ENCODE measurements at regions of chr4 and their contacts with region 1.

Region 1: DNA sequence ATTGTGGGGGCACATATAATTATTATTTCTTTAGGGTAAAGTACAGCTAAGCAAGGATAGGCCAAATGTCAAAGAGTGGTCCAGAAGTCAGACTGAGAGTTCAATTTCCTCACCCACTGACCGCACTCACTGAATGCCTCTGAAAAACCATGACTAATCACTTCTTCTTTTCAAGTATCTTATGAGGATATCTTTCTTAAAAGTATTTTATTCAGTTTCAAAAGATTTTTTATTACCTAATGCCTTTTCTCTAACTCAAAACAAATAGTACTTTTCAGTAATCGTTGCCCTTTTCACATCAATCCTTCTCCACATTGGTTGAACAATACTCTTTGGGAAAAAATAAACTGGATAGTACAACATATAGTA is 61.7 kb upstream of the CAMK2D start:
- DNase-seq: peak; percentile 85
- ATAC-seq: peak; percentile 84
- H3K4me3 ChIP-seq: peak overlapping the region; percentile 13; the same call in 1 of the 2 replicates
- H3K27ac ChIP-seq: peak overlapping the region; percentile 95
- H3K4me1 ChIP-seq: peaks cover 43% of the 10 kb centered on the region
- H3K27me3 ChIP-seq: no peaks in the 10 kb centered on the region
- CTCF ChIP-seq: no peak
- EP300 ChIP-seq: peak; percentile 54 to 88
- POLR2A ChIP-seq: no peak
- RAD21 ChIP-seq: no peak

Region 2: GRCh38 chr4:113423631-113424030 is 399.6 kb before region 1 on chr4:
- CTCF ChIA-PET with region 1: no interaction called
- POLR2A ChIA-PET with region 1: no interaction called
- RAD21 ChIA-PET with region 1: no interaction called
- SMC1A ChIA-PET with region 1: no interaction called
- in situ Hi-C with region 1: no loop called
- intact Hi-C with region 1: no loop called
- DNase-seq: no peak
- ATAC-seq: no peak
- H3K4me3 ChIP-seq: no peak overlapping the region
- H3K27ac ChIP-seq: no peak overlapping the region
- H3K4me1 ChIP-seq: no peaks in the 10 kb centered on the region
- H3K27me3 ChIP-seq: no peaks in the 10 kb centered on the region
- CTCF ChIP-seq: no peak
- EP300 ChIP-seq: no peak
- POLR2A ChIP-seq: no peak
- RAD21 ChIP-seq: no peak

Region 3: GRCh38 chr4:113684534-113685091 is 138.7 kb before region 1 on chr4:
- CTCF ChIA-PET with region 1: no interaction called
- POLR2A ChIA-PET with region 1: no interaction called
- RAD21 ChIA-PET with region 1: no interaction called
- SMC1A ChIA-PET with region 1: no interaction called
- in situ Hi-C with region 1: no loop called
- intact Hi-C with region 1: loop called (anchors 5 kb)
- DNase-seq: no peak
- ATAC-seq: peak; percentile 10; the same call in 2 of the 3 replicates
- H3K4me3 ChIP-seq: no peak overlapping the region
- H3K27ac ChIP-seq: no peak overlapping the region
- H3K4me1 ChIP-seq: peaks cover 32% of the 10 kb centered on the region
- H3K27me3 ChIP-seq: no peaks in the 10 kb centered on the region
- CTCF ChIP-seq: 0 out of 6 replicates have a peak, but pooled peaks of 1 of the 3 experiments have one; percentile 0
- EP300 ChIP-seq: no peak
- POLR2A ChIP-seq: no peak
- RAD21 ChIP-seq: 0 out of 2 replicates have a peak, but pooled peaks have one; percentile 4

Region 4: GRCh38 chr4:113761620-113762185 is 61.6 kb before region 1 on chr4 and contains the start of gene CAMK2D:
- CTCF ChIA-PET with region 1: no interaction called
- POLR2A ChIA-PET with region 1: no interaction called
- RAD21 ChIA-PET with region 1: interaction called, 9 read pairs
- SMC1A ChIA-PET with region 1: interaction called, 11 read pairs
- in situ Hi-C with region 1: no loop called
- intact Hi-C with region 1: loop called (anchors 1 kb)
- DNase-seq: peak; percentile 81
- ATAC-seq: peak; percentile 56
- H3K4me3 ChIP-seq: peak within 1 kb of the TSS; percentile 99
- H3K27ac ChIP-seq: peak within 1 kb of the TSS; percentile 98
- H3K4me1 ChIP-seq: no peaks in the 10 kb centered on the region
- H3K27me3 ChIP-seq: no peaks in the 10 kb centered on the region
- CTCF ChIP-seq: peak; percentile 60 to 95 (median 69)
- EP300 ChIP-seq: peak in 1 of 2 experiments; percentile 33; a peak in 2 of 4 replicates
- POLR2A ChIP-seq: no peak
- RAD21 ChIP-seq: peak; percentile 89
- polyA plus RNA-seq, gene CAMK2D: 6.9 to 10.2 TPM

Region 5: GRCh38 chr4:113781439-113782040 is 41.7 kb before region 1 on chr4:
- CTCF ChIA-PET with region 1: interaction called, 11 read pairs
- POLR2A ChIA-PET with region 1: interaction called, 3 read pairs
- RAD21 ChIA-PET with region 1: interaction called, 10 read pairs
- SMC1A ChIA-PET with region 1: interaction called, 28 read pairs
- in situ Hi-C with region 1: no loop called
- intact Hi-C with region 1: loop called (anchors 1 kb)
- DNase-seq: no peak
- ATAC-seq: peak; percentile 80
- H3K4me3 ChIP-seq: no peak overlapping the region
- H3K27ac ChIP-seq: no peak overlapping the region
- H3K4me1 ChIP-seq: no peaks in the 10 kb centered on the region
- H3K27me3 ChIP-seq: no peaks in the 10 kb centered on the region
- CTCF ChIP-seq: peak; percentile 45 to 47 (median 47); a peak in 4 of 6 replicates
- EP300 ChIP-seq: no peak
- POLR2A ChIP-seq: no peak
- RAD21 ChIP-seq: peak; percentile 65

Region 6: GRCh38 chr4:113869743-113870375 is 46.6 kb after region 1 on chr4:
- CTCF ChIA-PET with region 1: no interaction called
- POLR2A ChIA-PET with region 1: interaction called, 7 read pairs
- RAD21 ChIA-PET with region 1: interaction called, 4 read pairs
- SMC1A ChIA-PET with region 1: interaction called, 6 read pairs
- in situ Hi-C with region 1: no loop called
- intact Hi-C with region 1: loop called (anchors 2 kb)
- DNase-seq: peak; percentile 54
- ATAC-seq: peak; percentile 97
- H3K4me3 ChIP-seq: no peak overlapping the region
- H3K27ac ChIP-seq: peak overlapping the region; percentile 66
- H3K4me1 ChIP-seq: peaks cover 3% of the 10 kb centered on the region; the same call in 1 of the 2 replicates
- H3K27me3 ChIP-seq: no peaks in the 10 kb centered on the region
- CTCF ChIP-seq: no peak
- EP300 ChIP-seq: no peak
- POLR2A ChIP-seq: no peak
- RAD21 ChIP-seq: no peak

Region 7: GRCh38 chr4:113901994-113902787 is 78.9 kb after region 1 on chr4:
- CTCF ChIA-PET with region 1: interaction called, 4 read pairs
- POLR2A ChIA-PET with region 1: no interaction called
- RAD21 ChIA-PET with region 1: no interaction called
- SMC1A ChIA-PET with region 1: interaction called, 15 read pairs
- in situ Hi-C with region 1: no loop called
- intact Hi-C with region 1: loop called (anchors 5 kb)
- DNase-seq: no peak
- ATAC-seq: no peak
- H3K4me3 ChIP-seq: no peak overlapping the region
- H3K27ac ChIP-seq: no peak overlapping the region
- H3K4me1 ChIP-seq: peaks cover 11% of the 10 kb centered on the region
- H3K27me3 ChIP-seq: no peaks in the 10 kb centered on the region
- CTCF ChIP-seq: peak in 1 of 3 experiments; percentile 24; a peak in 1 of 6 replicates
- EP300 ChIP-seq: no peak
- POLR2A ChIP-seq: no peak
- RAD21 ChIP-seq: no peak; the same call in 1 of the 2 replicates

Region 8: DNA sequence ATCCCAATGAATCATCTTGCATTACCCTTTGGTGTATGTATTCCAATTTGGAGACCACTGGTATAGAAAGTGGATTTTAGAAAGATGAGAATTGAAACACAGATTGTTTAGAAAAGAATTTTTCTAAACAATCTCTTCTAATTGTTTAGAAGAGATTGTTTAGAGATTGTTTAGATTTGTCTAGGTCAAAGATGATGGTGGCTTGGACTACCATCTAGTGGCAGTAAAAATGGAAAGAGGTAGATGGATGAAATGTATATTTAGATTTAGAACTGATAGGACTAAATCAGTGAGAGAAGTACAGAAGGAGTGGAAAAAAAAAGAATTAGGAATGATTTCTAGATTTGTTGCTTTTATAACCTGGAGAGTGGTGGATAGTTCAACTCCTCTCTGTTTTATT is 85.6 kb after region 1 on chr4:
- CTCF ChIA-PET with region 1: no interaction called
- POLR2A ChIA-PET with region 1: no interaction called
- RAD21 ChIA-PET with region 1: no interaction called
- SMC1A ChIA-PET with region 1: interaction called, 4 read pairs
- in situ Hi-C with region 1: no loop called
- intact Hi-C with region 1: loop called (anchors 5 kb)
- DNase-seq: no peak
- ATAC-seq: peak; percentile 52; the same call in 1 of the 3 replicates
- H3K4me3 ChIP-seq: no peak overlapping the region
- H3K27ac ChIP-seq: no peak overlapping the region
- H3K4me1 ChIP-seq: no peaks in the 10 kb centered on the region
- H3K27me3 ChIP-seq: no peaks in the 10 kb centered on the region
- CTCF ChIP-seq: peak in 1 of 3 experiments; percentile 24; a peak in 2 of 6 replicates
- EP300 ChIP-seq: no peak
- POLR2A ChIP-seq: no peak
- RAD21 ChIP-seq: peak; percentile 77

Region 9: DNA sequence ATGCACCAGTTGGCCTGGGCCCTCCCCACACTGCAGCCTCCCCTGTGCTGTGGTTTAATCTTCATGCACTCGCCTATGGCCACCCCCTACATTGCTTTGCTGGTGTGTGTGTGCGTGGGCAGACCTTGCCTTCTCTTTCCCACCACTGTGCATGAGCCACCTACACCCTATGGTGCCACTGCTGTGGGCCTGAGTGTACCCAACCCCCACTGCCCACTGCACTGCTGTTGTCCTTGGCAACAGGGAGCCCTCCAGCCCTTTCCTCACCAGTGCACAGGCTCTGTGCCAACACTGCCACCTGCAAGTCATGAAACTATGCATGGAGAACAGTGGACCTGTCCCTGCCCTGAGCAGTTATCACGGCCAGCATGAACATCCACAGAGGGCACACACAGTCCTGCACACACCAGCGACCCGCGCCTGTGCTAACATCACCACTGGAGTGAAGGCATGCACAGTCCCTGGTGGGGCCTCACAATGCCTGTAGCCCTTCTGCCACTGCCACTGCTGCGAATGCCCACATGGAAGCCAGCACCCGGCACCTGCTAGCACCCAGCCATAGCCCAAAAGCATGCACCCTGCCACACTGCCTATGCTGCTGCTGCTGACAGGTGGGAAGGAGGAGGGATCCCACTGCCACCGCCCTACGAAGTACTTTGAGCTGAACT is 394.0 kb after region 1 on chr4:
- CTCF ChIA-PET with region 1: no interaction called
- POLR2A ChIA-PET with region 1: no interaction called
- RAD21 ChIA-PET with region 1: no interaction called
- SMC1A ChIA-PET with region 1: no interaction called
- in situ Hi-C with region 1: no loop called
- intact Hi-C with region 1: no loop called
- DNase-seq: no peak
- ATAC-seq: peak; percentile 17; the same call in 2 of the 3 replicates
- H3K4me3 ChIP-seq: no peak overlapping the region
- H3K27ac ChIP-seq: no peak overlapping the region
- H3K4me1 ChIP-seq: no peaks in the 10 kb centered on the region
- H3K27me3 ChIP-seq: no peaks in the 10 kb centered on the region
- CTCF ChIP-seq: no peak
- EP300 ChIP-seq: no peak
- POLR2A ChIP-seq: no peak
- RAD21 ChIP-seq: no peak

Measured in GM12878 (cell line).